ENCODE measurements at regions of chr1 and their contacts with region 1.

Region 1: DNA sequence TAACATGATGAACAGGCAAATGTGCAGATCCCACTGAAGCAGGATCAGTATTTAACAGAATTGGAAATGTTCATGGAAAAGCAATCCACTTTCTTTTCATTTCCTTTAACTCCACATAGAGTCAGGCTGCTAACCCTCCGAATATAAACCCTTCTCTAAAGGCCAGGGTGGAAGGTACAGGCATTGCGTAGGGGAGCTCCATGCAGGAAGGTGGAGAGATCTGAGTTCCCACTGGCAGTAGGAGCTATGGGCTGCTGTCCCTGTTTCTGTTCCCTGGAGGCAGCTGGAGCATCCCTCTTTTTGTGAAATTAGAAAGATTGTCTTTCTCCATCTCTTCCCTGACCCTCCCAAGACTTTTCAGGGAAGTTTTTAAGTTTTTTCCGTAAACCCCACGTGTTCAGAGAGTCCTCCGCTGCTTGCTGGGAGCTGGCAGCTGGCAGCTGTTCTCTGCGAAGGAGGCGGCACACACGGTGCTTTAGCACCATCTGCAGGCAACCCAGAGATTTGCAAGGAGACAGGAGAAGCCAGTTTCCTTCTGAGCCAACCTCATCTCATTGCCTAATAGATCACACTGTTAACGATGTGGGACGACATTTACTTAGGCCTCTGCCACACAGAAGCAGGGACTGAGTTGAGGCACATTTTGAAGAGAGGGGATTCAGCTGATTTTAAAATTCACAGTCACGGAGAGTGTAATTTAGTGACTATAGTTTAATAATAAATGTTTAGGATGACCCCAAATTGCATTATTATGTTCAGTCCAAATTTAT is 55.4 kb upstream of the HOOK1 start:
- DNase-seq: peak; percentile 87
- H3K4me3 ChIP-seq: no peak overlapping the region
- H3K27ac ChIP-seq: peak overlapping the region; percentile 34
- H3K4me1 ChIP-seq: peaks cover 4% of the 10 kb centered on the region
- H3K27me3 ChIP-seq: no peaks in the 10 kb centered on the region
- CTCF ChIP-seq: peak; percentile 87 to 94 (median 89)
- POLR2A ChIP-seq: no peak

Region 2: GRCh38 chr1:58739856-58740466 is 1019.4 kb before region 1 on chr1:
- intact Hi-C with region 1: loop called (anchors 10 kb)
- DNase-seq: no peak
- H3K4me3 ChIP-seq: no peak overlapping the region
- H3K27ac ChIP-seq: no peak overlapping the region
- H3K4me1 ChIP-seq: no peaks in the 10 kb centered on the region
- H3K27me3 ChIP-seq: no peaks in the 10 kb centered on the region
- CTCF ChIP-seq: peak; percentile 82 to 84 (median 84)
- POLR2A ChIP-seq: no peak

Region 3: GRCh38 chr1:59803458-59804038 is 44.2 kb after region 1 on chr1:
- intact Hi-C with region 1: no loop called
- DNase-seq: no peak
- H3K4me3 ChIP-seq: no peak overlapping the region
- H3K27ac ChIP-seq: no peak overlapping the region
- H3K4me1 ChIP-seq: no peaks in the 10 kb centered on the region
- H3K27me3 ChIP-seq: no peaks in the 10 kb centered on the region
- CTCF ChIP-seq: no peak
- POLR2A ChIP-seq: no peak